CD4-positive, alpha-beta memory T cell (primary cell): ENCODE measurements at regions of chr6 and their contacts with region 1.

Region 1: GRCh38 chr6:15255481-15255880 is 9.6 kb downstream of the JARID2 start:
- DNase-seq: no peak
- H3K4me3 ChIP-seq: no peak overlapping the region
- H3K4me3 Mint-ChIP-seq: peak overlapping the region in 5 of 8 donors; percentile 17 to 67 (median 23)
- H3K27ac ChIP-seq: no peak overlapping the region
- H3K27ac Mint-ChIP-seq: peak overlapping the region; percentile 22 to 98 (median 54)
- H3K4me1 ChIP-seq: peaks cover 100% of the 10 kb centered on the region
- H3K4me1 Mint-ChIP-seq: peaks cover 70 to 99% (median 86%) of the 10 kb centered on the region in 4 donors
- H3K27me3 ChIP-seq: no peaks in the 10 kb centered on the region
- H3K27me3 Mint-ChIP-seq: no peaks in the 10 kb centered on the region

Region 2: DNA sequence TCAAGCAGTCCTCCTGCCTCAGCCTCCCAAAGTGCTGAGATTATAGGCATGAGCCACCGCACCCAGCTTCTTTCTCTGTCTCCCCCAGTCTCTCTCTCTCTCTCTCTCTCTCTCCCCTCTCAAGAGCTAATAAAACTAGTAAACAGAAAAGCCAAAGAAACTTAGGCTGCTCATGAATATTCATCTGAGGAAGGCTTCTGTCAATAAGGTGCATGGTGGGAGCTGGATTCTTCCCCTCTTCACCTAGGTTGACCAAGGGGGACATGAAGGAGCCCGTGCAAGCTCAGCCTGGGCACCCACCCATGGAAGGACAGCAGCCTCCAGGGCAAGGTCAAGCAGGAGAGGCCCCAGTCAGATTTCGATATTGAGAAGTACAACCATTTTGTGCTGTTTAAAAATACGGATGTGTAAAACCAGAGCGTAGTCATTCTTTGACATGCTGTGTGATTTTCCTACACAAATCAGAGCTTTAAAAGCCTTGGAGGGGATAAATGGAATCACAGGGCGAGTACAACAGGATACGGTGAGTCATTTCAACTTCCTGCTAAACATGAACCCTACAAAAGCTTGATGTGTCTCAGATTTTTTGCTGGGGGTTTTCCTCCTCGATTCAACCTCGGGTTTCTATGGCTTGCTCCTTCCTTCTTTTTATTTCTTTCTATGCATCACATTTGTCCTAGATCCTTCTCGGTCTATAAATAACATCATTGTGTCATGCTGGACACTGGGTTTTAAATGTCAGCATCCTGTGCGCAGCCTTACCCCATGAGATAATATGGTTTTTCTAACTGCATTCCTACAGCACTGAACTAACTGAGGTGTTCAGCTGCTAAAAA is 378.5 kb before region 1 on chr6:
- CTCF ChIA-PET with region 1: no interaction called
- POLR2A ChIA-PET with region 1: no interaction called
- intact Hi-C with region 1: loop called (anchors 5 kb)
- DNase-seq: peak; percentile 17 to 70 (median 23)
- H3K4me3 ChIP-seq: peak overlapping the region in 1 of 2 donors; percentile 6
- H3K4me3 Mint-ChIP-seq: peak overlapping the region; percentile 45 to 75 (median 70)
- H3K27ac ChIP-seq: no peak overlapping the region
- H3K27ac Mint-ChIP-seq: peak overlapping the region; percentile 80 to 92 (median 85)
- H3K4me1 ChIP-seq: peaks cover 30% of the 10 kb centered on the region
- H3K4me1 Mint-ChIP-seq: peaks cover 20 to 46% (median 25%) of the 10 kb centered on the region in 4 donors
- H3K27me3 ChIP-seq: no peaks in the 10 kb centered on the region
- H3K27me3 Mint-ChIP-seq: no peaks in the 10 kb centered on the region

Region 3: GRCh38 chr6:14943116-14943515 is 312.4 kb before region 1 on chr6:
- CTCF ChIA-PET with region 1: no interaction called
- POLR2A ChIA-PET with region 1: no interaction called
- intact Hi-C with region 1: no loop called
- DNase-seq: no peak
- H3K4me3 ChIP-seq: no peak overlapping the region
- H3K4me3 Mint-ChIP-seq: no peak overlapping the region
- H3K27ac ChIP-seq: no peak overlapping the region
- H3K27ac Mint-ChIP-seq: no peak overlapping the region
- H3K4me1 ChIP-seq: no peaks in the 10 kb centered on the region
- H3K4me1 Mint-ChIP-seq: no peaks in the 10 kb centered on the region
- H3K27me3 ChIP-seq: no peaks in the 10 kb centered on the region
- H3K27me3 Mint-ChIP-seq: peaks cover 1 to 3% of the 10 kb centered on the region in 2 donors

Region 4: DNA sequence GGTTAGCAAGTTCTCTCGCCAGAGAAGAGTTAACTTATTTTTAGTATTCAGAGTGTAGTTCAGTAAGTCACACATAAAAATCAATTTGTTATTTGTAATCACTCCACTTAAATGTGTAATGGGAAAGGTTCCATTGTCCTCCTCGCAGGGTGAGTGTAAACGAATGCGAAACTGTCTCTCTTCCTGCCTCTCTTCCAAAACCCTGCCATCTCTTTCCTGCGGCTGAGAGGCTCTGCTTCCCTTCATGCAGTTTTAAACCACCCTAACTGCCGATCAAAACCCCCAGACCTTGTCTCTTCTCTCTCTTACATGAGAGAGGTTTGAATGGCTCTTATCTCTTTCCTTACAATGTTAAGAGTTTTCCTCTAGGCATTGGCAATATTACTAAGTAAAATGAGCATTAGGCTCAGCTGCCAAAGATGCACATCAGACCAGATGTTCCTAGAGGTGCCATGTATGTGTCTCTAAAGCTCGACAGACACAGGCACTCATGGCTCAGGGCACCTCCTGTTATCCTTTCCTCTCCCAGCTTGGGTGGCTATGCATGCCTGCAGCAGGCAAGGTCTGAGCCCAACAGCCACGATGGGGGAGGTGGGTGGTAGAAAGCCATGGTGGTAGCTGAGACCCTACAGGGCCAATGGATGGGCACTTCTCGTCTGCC is 81.5 kb after region 1 on chr6:
- CTCF ChIA-PET with region 1: no interaction called
- POLR2A ChIA-PET with region 1: no interaction called
- intact Hi-C with region 1: no loop called
- DNase-seq: no peak
- H3K4me3 ChIP-seq: no peak overlapping the region
- H3K4me3 Mint-ChIP-seq: peak overlapping the region in 3 of 8 donors; percentile 6 to 38 (median 27)
- H3K27ac ChIP-seq: no peak overlapping the region
- H3K27ac Mint-ChIP-seq: peak overlapping the region in 6 of 7 donors; percentile 13 to 69 (median 40)
- H3K4me1 ChIP-seq: peaks cover 54% of the 10 kb centered on the region
- H3K4me1 Mint-ChIP-seq: peaks cover 49 to 86% (median 69%) of the 10 kb centered on the region in 4 donors
- H3K27me3 ChIP-seq: no peaks in the 10 kb centered on the region
- H3K27me3 Mint-ChIP-seq: no peaks in the 10 kb centered on the region